ENCODE measurements at regions of chr2 and their contacts with region 1.

Region 1: GRCh38 chr2:127485051-127485693 is 41.1 kb downstream of the IWS1 start:
- DNase-seq: peak in 2 of 9 donors; percentile 4 to 7
- ATAC-seq: no peak
- H3K4me3 ChIP-seq: no peak overlapping the region
- H3K4me3 Mint-ChIP-seq: peak overlapping the region in 6 of 10 donors; percentile 5 to 71 (median 46)
- H3K27ac ChIP-seq: peak overlapping the region; percentile 42
- H3K27ac Mint-ChIP-seq: peak overlapping the region; percentile 75 to 88 (median 82)
- H3K4me1 ChIP-seq: peaks cover 0 to 4% of the 10 kb centered on the region in 2 donors
- H3K4me1 Mint-ChIP-seq: peaks cover 9 to 39% (median 35%) of the 10 kb centered on the region in 7 donors
- H3K27me3 ChIP-seq: no peaks in the 10 kb centered on the region
- H3K27me3 Mint-ChIP-seq: no peaks in the 10 kb centered on the region

Region 2: GRCh38 chr2:126953483-126953882 is 531.7 kb before region 1 on chr2:
- CTCF ChIA-PET with region 1: no interaction called
- POLR2A ChIA-PET with region 1: no interaction called
- intact Hi-C with region 1: no loop called
- DNase-seq: no peak
- ATAC-seq: no peak
- H3K4me3 ChIP-seq: no peak overlapping the region
- H3K4me3 Mint-ChIP-seq: no peak overlapping the region
- H3K27ac ChIP-seq: no peak overlapping the region
- H3K27ac Mint-ChIP-seq: no peak overlapping the region
- H3K4me1 ChIP-seq: no peaks in the 10 kb centered on the region
- H3K4me1 Mint-ChIP-seq: peaks cover 0 to 2% (median 0%) of the 10 kb centered on the region in 7 donors
- H3K27me3 ChIP-seq: no peaks in the 10 kb centered on the region
- H3K27me3 Mint-ChIP-seq: peaks cover 5 to 53% (median 40%) of the 10 kb centered on the region in 5 donors

Region 3: GRCh38 chr2:127498386-127498785 is 13.2 kb after region 1 on chr2:
- CTCF ChIA-PET with region 1: no interaction called
- POLR2A ChIA-PET with region 1: no interaction called
- intact Hi-C with region 1: loop called in 1 of 2 experiments (anchors 1 kb)
- DNase-seq: no peak
- ATAC-seq: no peak
- H3K4me3 ChIP-seq: no peak overlapping the region
- H3K4me3 Mint-ChIP-seq: no peak overlapping the region
- H3K27ac ChIP-seq: no peak overlapping the region
- H3K27ac Mint-ChIP-seq: peak overlapping the region in 7 of 9 donors; percentile 1 to 62 (median 39)
- H3K4me1 ChIP-seq: no peaks in the 10 kb centered on the region
- H3K4me1 Mint-ChIP-seq: peaks cover 0 to 15% (median 3%) of the 10 kb centered on the region in 7 donors
- H3K27me3 ChIP-seq: no peaks in the 10 kb centered on the region
- H3K27me3 Mint-ChIP-seq: no peaks in the 10 kb centered on the region

Region 4: GRCh38 chr2:127753374-127753773 is 268.2 kb after region 1 on chr2:
- CTCF ChIA-PET with region 1: no interaction called
- POLR2A ChIA-PET with region 1: no interaction called
- intact Hi-C with region 1: no loop called
- DNase-seq: no peak
- ATAC-seq: no peak
- H3K4me3 ChIP-seq: no peak overlapping the region
- H3K4me3 Mint-ChIP-seq: no peak overlapping the region
- H3K27ac ChIP-seq: no peak overlapping the region
- H3K27ac Mint-ChIP-seq: no peak overlapping the region
- H3K4me1 ChIP-seq: no peaks in the 10 kb centered on the region
- H3K4me1 Mint-ChIP-seq: peaks cover 0 to 9% (median 5%) of the 10 kb centered on the region in 7 donors
- H3K27me3 ChIP-seq: no peaks in the 10 kb centered on the region
- H3K27me3 Mint-ChIP-seq: no peaks in the 10 kb centered on the region

Measured in naive thymus-derived CD4-positive, alpha-beta T cell (primary cell).